ENCODE measurements at regions of chr9 and their contacts with region 1.

Region 1: GRCh38 chr9:121059998-121060636 is 10.0 kb upstream of the C5 start:
- DNase-seq: peak; percentile 51
- CTCF ChIP-seq: peak; percentile 65

Region 2: DNA sequence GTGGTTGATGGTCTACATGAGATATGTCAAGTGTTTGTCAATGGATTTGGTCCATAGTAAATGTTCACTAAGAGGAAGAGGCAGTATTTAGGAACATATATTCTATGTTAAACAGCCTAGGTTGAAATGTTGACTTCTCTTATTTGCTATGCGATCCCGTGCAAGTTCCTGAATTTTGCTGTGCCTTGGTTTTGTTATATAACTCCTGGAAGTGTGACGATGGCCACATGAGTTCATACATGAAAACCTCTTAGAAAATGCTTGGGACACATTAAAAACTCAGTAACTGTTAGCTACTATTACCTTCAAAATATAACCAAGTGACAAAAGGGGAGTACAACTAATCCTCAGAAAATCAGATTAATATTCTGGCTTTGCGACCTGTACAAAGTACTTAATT is 245.0 kb before region 1 on chr9:
- in situ Hi-C with region 1: no loop called
- DNase-seq: no peak
- CTCF ChIP-seq: no peak

Region 3: GRCh38 chr9:120985810-120986222 is 74.3 kb before region 1 on chr9:
- in situ Hi-C with region 1: loop called (anchors 10 kb)
- DNase-seq: peak; percentile 50
- CTCF ChIP-seq: peak; percentile 42

Region 4: DNA sequence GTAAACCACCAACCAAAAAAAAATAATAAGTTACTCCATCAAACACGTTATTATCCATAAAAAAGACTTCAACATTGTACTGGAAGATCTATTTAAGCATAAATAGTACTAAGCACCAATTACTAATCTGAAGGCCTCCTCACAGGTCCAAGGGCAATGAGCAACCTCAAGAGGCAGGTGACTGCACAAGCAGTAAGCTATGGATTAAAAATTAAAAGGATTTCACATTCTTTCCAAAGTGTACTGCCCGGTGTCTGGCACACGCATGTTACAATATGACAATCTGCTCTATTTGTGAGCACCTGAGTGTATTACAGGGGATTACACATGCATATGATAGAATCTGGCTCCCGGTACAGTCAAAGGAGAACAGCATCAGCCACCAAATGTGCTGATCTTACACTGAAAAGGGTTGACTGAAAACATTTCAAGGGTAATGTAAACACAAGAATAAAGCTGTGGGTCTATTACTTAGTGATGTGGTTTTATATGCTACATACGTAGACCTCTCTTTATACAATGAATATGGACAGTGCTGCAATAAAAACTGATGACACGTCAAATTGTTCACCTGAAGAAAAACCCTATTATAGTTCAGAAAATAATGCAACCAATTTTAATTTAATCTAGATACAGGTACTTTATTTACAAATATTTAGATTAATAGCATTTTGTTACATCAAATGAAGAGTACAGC is 118.7 kb after region 1 on chr9:
- in situ Hi-C with region 1: no loop called
- DNase-seq: no peak
- CTCF ChIP-seq: no peak